CD8-positive, alpha-beta memory T cell (primary cell): ENCODE measurements at regions of chr12 and their contacts with region 1.

Region 1: DNA sequence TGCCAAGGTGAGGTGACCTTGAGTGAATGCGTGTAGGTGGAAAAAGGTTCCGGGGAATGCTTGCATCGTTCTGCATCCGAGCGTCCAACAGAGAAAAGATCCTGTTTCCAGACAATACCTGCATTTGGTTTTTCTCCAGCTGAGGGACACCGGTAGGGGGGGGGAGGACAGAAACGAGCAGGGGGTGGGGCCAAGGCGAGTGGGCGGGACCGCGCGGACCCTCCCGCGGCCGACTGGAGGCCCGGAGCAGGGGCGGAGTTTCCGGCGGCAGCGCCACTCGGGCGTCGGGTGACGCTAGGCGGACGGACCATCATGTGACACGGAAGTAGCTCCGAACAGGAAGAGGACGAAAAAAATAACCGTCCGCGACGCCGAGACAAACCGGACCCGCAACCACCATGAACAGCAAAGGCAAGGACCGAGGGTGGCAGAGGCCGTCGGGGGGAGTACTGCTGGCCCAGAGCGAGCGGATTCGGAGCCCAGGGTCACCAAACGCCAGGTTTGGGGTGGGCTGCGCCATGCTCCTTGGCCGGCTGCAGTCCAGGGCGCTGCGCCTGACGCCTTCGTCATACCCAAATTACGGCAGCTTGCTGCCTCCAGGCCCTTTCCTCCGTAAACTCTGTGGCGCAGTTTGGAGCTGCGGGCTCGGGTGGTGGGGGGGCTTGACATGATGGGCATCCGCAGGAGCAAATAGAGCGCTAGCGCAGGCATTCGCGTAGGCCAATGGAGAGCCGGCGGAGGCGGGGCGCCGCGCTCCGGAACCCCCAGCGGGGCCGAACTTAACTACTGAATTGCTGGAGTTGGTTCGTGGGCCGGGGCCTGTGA is at the start of gene DAZAP2:
- DNase-seq: peak; percentile 91 to 97 (median 95)
- H3K4me3 ChIP-seq: peak within 1 kb of the TSS; percentile 96
- H3K4me3 Mint-ChIP-seq: peak within 1 kb of the TSS; percentile 94 to 100 (median 98)
- H3K27ac ChIP-seq: peak within 1 kb of the TSS; percentile 100
- H3K27ac Mint-ChIP-seq: peak within 1 kb of the TSS; percentile 99 to 100 (median 100)
- H3K4me1 ChIP-seq: peaks cover 32% of the 10 kb centered on the region
- H3K4me1 Mint-ChIP-seq: peaks cover 39 to 46% (median 45%) of the 10 kb centered on the region in 3 donors
- H3K27me3 ChIP-seq: no peaks in the 10 kb centered on the region
- H3K27me3 Mint-ChIP-seq: peaks cover 3% of the 10 kb centered on the region in 2 donors
- total RNA-seq, gene DAZAP2: 97.2 to 100 TPM

Region 2: GRCh38 chr12:50862316-50862715 is 376.4 kb before region 1 on chr12:
- CTCF ChIA-PET with region 1: no interaction called
- POLR2A ChIA-PET with region 1: no interaction called
- DNase-seq: no peak
- H3K4me3 ChIP-seq: no peak overlapping the region
- H3K4me3 Mint-ChIP-seq: no peak overlapping the region
- H3K27ac ChIP-seq: no peak overlapping the region
- H3K27ac Mint-ChIP-seq: no peak overlapping the region
- H3K4me1 ChIP-seq: no peaks in the 10 kb centered on the region
- H3K4me1 Mint-ChIP-seq: no peaks in the 10 kb centered on the region
- H3K27me3 ChIP-seq: no peaks in the 10 kb centered on the region
- H3K27me3 Mint-ChIP-seq: peaks cover 20 to 22% of the 10 kb centered on the region in 2 donors

Region 3: GRCh38 chr12:51083126-51083833 is 155.4 kb before region 1 on chr12 and contains the start of gene CSRNP2:
- CTCF ChIA-PET with region 1: no interaction called
- POLR2A ChIA-PET with region 1: interaction called, 10 read pairs
- DNase-seq: peak; percentile 91 to 97 (median 94)
- H3K4me3 ChIP-seq: peak within 1 kb of the TSS; percentile 79
- H3K4me3 Mint-ChIP-seq: peak within 1 kb of the TSS; percentile 88 to 99 (median 97)
- H3K27ac ChIP-seq: peak within 1 kb of the TSS; percentile 72
- H3K27ac Mint-ChIP-seq: peak within 1 kb of the TSS; percentile 72 to 99 (median 94)
- H3K4me1 ChIP-seq: peaks cover 9% of the 10 kb centered on the region
- H3K4me1 Mint-ChIP-seq: peaks cover 27 to 50% (median 39%) of the 10 kb centered on the region in 3 donors
- H3K27me3 ChIP-seq: no peaks in the 10 kb centered on the region
- H3K27me3 Mint-ChIP-seq: peaks cover 0 to 5% of the 10 kb centered on the region in 2 donors
- total RNA-seq, gene CSRNP2: 20.5 to 21.5 TPM

Region 4: GRCh38 chr12:51217968-51218606 is 20.6 kb before region 1 on chr12 and contains the start of gene POU6F1:
- CTCF ChIA-PET with region 1: interaction called, 31 read pairs
- POLR2A ChIA-PET with region 1: interaction called, 125 read pairs
- DNase-seq: peak; percentile 55 to 81 (median 73)
- H3K4me3 ChIP-seq: peak within 1 kb of the TSS; percentile 96
- H3K4me3 Mint-ChIP-seq: peak within 1 kb of the TSS; percentile 92 to 98 (median 94)
- H3K27ac ChIP-seq: peak within 1 kb of the TSS; percentile 90
- H3K27ac Mint-ChIP-seq: peak within 1 kb of the TSS; percentile 91 to 99 (median 97)
- H3K4me1 ChIP-seq: peaks cover 17% of the 10 kb centered on the region
- H3K4me1 Mint-ChIP-seq: peaks cover 22 to 40% (median 23%) of the 10 kb centered on the region in 3 donors
- H3K27me3 ChIP-seq: no peaks in the 10 kb centered on the region
- H3K27me3 Mint-ChIP-seq: no peaks in the 10 kb centered on the region
- total RNA-seq, gene POU6F1: 12.0 to 15.4 TPM

Region 5: GRCh38 chr12:51270067-51270970 is 31.6 kb after region 1 on chr12 and contains the start of gene SMAGP:
- CTCF ChIA-PET with region 1: interaction called, 4 read pairs
- POLR2A ChIA-PET with region 1: interaction called, 11 read pairs
- DNase-seq: peak; percentile 46 to 70 (median 49)
- H3K4me3 ChIP-seq: peak within 1 kb of the TSS; percentile 77
- H3K4me3 Mint-ChIP-seq: peak within 1 kb of the TSS; percentile 90 to 97 (median 94)
- H3K27ac ChIP-seq: peak within 1 kb of the TSS; percentile 25
- H3K27ac Mint-ChIP-seq: peak within 1 kb of the TSS; percentile 74 to 97 (median 92)
- H3K4me1 ChIP-seq: peaks cover 20% of the 10 kb centered on the region
- H3K4me1 Mint-ChIP-seq: peaks cover 24 to 37% (median 30%) of the 10 kb centered on the region in 3 donors
- H3K27me3 ChIP-seq: no peaks in the 10 kb centered on the region
- H3K27me3 Mint-ChIP-seq: no peaks in the 10 kb centered on the region
- total RNA-seq, gene SMAGP: 0.72 to 0.84 TPM

Region 6: GRCh38 chr12:51293696-51294095 is 55.0 kb after region 1 on chr12:
- CTCF ChIA-PET with region 1: no interaction called
- POLR2A ChIA-PET with region 1: no interaction called
- DNase-seq: no peak
- H3K4me3 ChIP-seq: no peak overlapping the region
- H3K4me3 Mint-ChIP-seq: no peak overlapping the region
- H3K27ac ChIP-seq: no peak overlapping the region
- H3K27ac Mint-ChIP-seq: peak overlapping the region in 5 of 8 donors; percentile 14 to 88 (median 32)
- H3K4me1 ChIP-seq: peaks cover 8% of the 10 kb centered on the region
- H3K4me1 Mint-ChIP-seq: peaks cover 14 to 22% (median 17%) of the 10 kb centered on the region in 3 donors
- H3K27me3 ChIP-seq: no peaks in the 10 kb centered on the region
- H3K27me3 Mint-ChIP-seq: no peaks in the 10 kb centered on the region

Region 7: DNA sequence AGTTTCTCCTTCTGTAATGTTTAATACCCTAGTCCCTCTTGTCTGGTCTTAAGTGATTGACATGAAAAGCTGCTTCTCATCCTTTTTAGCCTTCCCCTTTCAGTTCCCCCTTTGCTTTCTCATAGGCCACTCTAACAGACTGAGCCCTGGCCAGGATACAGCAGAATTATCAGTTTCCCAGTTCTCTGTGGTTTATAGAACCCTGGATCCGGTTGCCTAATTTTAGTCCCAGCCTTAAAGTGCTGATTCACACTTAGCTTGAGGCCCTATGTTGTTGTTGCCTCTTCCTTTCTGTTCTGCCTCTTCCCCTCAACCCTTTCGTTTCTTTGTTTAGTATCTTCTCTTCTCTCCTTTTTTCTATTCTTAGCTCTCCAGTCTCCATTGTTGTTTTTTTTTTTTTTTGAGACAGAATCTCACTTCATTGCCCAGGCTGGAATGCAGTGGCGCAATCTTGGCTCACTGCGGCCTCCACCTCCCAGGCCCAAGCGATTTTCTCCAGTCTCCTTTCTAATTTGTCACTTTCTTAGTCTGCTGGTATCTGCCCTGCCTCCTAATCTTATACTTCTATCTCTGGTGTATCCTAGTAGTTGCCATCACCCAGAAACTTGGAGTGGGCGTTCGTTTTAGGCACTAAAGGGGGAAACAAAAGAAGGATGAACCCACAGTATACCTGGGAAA is 88.2 kb after region 1 on chr12:
- CTCF ChIA-PET with region 1: no interaction called
- POLR2A ChIA-PET with region 1: interaction called, 11 read pairs
- DNase-seq: no peak
- H3K4me3 ChIP-seq: no peak overlapping the region
- H3K4me3 Mint-ChIP-seq: peak overlapping the region; percentile 38 to 75 (median 58)
- H3K27ac ChIP-seq: peak overlapping the region; percentile 70
- H3K27ac Mint-ChIP-seq: peak overlapping the region; percentile 81 to 97 (median 88)
- H3K4me1 ChIP-seq: peaks cover 55% of the 10 kb centered on the region
- H3K4me1 Mint-ChIP-seq: peaks cover 67 to 82% (median 80%) of the 10 kb centered on the region in 3 donors
- H3K27me3 ChIP-seq: no peaks in the 10 kb centered on the region
- H3K27me3 Mint-ChIP-seq: no peaks in the 10 kb centered on the region